Activated CD8-positive, alpha-beta memory T cell treated with anti-CD3 and anti-CD28 coated beads, Interleukin-2, amount 10 ng/mL, durations not matched to agents 7 days and 5 days (primary cell): ENCODE measurements at regions of chr7 and their contacts with region 1.

Region 1: DNA sequence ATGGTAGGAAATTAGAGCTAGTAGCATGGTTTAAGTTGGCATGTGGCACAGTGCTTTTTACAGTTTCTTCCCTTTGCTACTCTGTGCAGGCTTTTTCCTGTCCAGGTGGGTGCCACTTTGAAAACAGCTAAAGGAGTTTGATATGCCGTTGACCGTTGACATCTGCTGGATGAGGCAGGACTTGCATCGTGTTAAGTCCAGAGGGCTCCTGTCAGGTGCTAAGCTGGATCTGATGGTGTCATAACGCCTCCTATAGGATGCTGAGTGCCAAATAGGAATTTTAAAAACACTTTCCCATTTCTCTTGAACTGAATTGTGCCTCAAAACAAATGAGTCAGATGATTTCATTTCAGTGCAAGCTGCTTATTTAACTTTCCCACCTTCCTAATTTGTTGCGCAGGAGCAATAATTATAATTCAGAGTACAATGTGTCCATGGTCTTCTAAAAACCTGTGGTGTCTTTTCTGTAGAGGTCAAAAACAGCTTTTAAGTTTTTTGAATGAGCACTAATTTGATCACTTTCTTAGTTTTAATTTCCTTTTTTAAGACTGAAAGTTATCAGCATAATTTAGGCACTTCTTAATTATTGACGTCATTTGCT is 178.3 kb downstream of the CDCA7L start:
- DNase-seq: peak; percentile 59
- ATAC-seq: peak; percentile 71
- H3K4me3 Mint-ChIP-seq: no peak overlapping the region
- H3K27ac Mint-ChIP-seq: no peak overlapping the region
- H3K4me1 Mint-ChIP-seq: peaks cover 3% of the 10 kb centered on the region
- H3K27me3 Mint-ChIP-seq: peaks cover 49% of the 10 kb centered on the region

Region 2: DNA sequence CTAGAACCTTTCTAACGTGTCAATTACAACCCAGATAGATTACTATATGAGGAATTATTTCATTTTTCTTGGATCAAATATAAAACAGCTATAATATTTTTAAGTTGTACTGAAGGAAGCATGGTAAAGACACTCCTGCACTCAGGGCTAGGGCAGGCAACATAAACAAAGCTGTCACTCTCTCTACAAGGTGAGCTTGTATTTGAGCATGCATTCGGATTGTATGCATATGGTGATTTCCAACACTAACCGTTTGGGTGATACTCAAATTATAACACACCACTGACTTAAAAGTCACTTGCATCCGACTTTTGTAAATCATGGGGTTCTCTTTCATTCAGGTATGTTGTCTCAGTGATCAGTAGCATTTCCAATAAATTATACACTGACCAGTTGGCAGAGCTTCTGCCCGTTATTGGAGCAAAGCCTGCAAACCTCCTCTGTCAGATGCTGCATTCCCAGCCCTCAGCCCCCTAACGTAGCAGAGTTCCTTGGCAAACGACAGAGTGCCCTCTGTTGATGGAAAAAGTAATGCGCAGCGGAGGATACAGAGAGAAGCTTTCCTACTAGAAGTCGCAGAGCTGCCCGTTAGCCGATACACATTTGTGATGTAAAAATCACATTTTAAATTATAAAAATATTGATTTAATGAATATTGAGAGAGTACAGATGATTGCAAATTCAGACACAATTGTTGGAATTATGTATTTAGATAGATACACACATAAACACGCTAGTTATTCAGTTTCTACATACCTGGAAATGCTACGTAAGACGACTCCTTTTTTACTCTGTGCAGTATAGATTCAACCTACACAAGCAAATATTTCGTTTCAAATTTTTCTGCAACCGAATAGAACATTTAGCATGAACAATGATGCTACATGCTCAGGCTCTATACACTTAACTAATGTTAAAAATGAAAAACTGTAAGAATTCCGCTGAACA is 513.4 kb before region 1 on chr7:
- CTCF ChIA-PET with region 1: interaction called, 11 read pairs
- DNase-seq: peak; percentile 65
- ATAC-seq: peak; percentile 80
- H3K4me3 Mint-ChIP-seq: peak overlapping the region; percentile 39
- H3K27ac Mint-ChIP-seq: no peak overlapping the region
- H3K4me1 Mint-ChIP-seq: peaks cover 15% of the 10 kb centered on the region
- H3K27me3 Mint-ChIP-seq: peaks cover 64% of the 10 kb centered on the region

Region 3: DNA sequence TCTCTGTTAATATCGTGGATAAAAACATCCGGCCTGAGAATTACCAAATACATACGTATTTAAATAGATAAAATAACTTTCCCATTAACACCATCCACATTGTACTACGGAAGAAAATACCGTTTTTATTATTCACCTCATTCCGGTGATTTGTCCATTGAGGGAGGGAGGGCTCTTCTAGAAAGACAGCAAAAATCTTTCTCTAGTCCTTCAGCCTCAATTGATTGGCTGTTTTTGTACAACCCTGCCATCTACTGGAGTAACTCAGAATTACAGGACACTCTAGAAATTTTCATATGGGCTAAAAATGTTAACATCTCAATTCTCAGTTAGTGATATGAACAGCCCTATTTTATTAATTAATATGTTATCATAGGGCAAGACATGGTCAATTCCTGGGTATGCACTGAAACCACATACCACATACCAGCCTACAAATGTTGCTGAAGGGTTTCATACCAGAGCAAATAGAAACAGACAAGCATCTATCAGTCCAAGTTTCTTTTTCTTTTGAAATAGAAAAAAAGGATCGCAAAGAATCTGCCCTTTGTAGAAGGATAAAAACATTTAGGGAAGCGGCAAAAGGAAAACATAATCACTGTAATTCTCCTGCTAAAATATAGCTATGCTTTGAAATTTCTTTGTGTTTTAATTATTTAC is 234.1 kb after region 1 on chr7:
- CTCF ChIA-PET with region 1: no interaction called
- DNase-seq: no peak
- ATAC-seq: peak; percentile 53
- H3K4me3 Mint-ChIP-seq: no peak overlapping the region
- H3K27ac Mint-ChIP-seq: no peak overlapping the region
- H3K4me1 Mint-ChIP-seq: peaks cover 2% of the 10 kb centered on the region
- H3K27me3 Mint-ChIP-seq: peaks cover 39% of the 10 kb centered on the region